ENCODE measurements at regions of chr15 and their contacts with region 1.

Region 1: DNA sequence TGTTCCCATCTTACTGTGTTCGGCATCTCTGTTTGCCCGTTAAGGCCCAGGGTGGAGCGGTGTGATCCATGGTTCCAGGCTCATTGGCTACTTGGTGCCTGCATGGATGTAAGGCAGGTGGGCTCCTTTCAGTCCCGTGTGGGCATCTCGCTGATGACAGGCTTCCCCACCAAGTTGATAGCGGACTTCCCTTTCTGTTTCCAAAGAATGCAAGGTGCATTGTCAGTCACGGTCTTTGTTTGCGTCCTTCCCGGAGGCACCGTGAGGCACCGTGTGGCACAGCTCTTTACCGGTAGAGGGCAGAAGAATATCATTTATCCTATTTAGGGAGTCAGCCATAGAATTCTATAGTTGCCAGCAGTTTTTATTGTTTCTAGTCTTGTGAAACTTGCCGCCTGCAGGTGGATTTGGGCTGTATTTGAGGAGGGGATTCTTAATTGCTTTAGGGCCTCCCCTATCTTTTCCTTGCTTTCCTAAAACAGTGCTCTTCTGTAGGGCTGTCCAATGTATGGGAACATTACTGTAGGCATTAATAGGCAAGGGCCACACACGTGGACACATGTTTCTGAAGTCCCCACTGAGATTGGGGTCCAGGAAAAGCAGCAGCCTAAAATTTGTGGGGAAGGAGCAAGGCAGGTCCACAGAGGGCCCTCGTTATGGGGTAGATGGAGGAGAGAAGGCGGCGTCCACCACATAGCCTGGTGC is 244.1 kb downstream of the SLCO3A1 start:
- DNase-seq: no peak

Region 2: GRCh38 chr15:92142242-92143232 is 44.9 kb after region 1 on chr15:
- intact Hi-C with region 1: no loop called
- DNase-seq: no peak

Region 3: DNA sequence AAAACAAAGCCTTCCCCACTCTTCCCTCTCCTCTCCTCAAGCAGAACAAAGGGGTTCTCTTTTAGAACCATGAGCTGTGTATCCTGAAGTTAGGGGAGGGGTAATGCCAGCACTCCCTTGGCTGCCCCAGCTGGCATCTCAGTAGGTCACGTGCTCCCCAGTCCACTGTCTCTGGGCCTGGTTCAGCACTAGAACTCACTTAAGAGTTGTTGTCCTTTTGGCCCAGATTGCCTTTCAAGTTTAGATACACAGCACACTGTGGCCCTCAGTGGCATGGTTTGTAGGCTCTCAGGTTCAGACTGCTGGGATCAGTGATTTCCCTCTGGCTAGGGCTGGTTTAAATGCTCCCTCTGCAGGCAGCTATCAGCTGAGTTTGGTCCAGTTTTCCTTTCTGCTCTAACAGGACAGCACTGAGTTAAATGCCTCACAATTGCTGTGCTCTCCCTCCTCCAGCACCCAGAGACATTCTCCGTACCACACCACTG is 107.7 kb after region 1 on chr15:
- intact Hi-C with region 1: loop called (anchors 1 kb)
- DNase-seq: no peak

Region 4: GRCh38 chr15:92226014-92226612 is 128.5 kb after region 1 on chr15:
- intact Hi-C with region 1: loop called (anchors 2 kb)
- DNase-seq: no peak

Region 5: GRCh38 chr15:92391640-92392039 is 294.0 kb after region 1 on chr15:
- intact Hi-C with region 1: loop called (anchors 5 kb)
- DNase-seq: no peak

Region 6: GRCh38 chr15:92473756-92474155 is 376.1 kb after region 1 on chr15:
- intact Hi-C with region 1: no loop called
- DNase-seq: peak; percentile 46

Region 7: DNA sequence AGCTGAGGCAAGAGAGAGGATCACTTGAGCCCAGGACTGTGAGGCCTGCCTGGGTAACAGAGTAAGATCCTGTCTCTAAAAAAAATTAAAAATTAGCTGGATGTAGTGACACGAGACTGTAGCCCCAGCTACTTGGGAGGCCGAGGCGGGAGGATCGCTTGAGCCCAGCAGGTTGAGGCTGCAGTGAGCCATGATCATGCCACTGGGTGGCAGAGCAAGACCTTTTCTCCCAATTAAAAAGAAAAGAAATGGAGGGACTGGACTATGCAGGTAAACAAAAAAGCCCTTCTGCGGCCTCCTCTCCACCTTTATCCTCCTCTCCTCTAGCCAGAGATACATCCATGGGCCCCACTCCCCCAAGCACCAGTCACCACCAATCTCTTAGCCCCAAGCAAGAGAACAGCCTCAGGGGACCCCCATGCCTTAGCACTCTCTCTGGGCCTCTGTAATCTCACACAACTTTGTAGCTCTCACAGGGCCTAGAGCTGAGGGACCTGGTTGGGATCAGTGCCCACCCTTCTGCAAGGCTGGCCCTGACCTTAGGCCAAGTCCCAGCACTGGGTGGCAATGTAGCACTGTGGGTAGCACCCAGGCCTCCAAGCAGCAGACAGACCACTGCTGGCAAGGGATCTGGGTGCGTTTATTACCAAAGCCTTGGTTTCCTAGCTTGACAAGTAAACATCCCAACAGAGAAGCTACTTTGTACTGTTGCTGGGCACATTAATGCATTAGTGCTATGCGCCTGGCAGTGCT is 514.5 kb after region 1 on chr15:
- intact Hi-C with region 1: no loop called
- DNase-seq: no peak

Region 8: DNA sequence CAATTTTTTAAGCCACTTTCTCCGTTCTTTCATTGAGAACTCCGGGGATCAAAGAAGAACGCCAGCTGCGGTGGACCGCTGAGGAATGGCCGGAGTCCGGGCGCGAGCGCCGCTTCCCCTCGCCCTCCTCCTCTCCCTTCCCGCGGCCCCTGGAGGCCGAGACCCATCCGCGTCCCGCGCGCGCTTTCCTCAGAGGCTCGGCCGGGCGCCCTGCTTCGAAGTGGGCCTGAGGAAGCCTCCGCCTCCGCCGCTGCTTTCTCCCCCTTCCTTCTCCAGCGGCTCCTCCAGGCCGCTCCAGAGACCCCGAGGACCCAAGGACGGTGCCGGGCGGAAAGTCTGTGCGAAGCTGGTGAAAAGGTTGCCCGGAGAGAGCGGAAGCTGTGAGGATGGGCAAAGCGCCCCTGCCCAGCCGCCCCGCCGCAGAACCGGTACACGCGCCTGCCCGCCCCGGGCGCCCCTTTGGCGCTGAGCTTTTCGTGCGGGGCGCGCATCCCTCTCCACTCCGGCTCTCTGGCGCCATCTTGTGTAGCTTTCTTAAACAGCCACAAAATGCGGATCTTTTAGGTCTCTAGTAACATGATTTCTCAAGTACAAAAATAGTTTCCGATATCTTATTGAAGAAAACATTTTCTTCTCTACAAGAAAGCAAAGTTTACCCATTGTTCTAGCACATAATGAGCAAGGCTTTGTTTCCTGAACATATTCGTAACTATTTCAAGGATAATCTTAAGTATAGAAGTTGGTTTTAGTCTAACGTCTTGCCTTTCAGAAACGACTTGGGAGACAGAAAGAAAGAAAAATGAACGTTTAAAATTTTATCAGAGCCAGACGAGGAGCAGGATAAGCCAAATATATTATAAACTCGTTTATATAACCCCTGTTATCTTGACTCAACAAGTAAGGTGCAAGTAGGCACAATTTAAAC is 617.1 kb after region 1 on chr15:
- intact Hi-C with region 1: loop called (anchors 5 kb)
- DNase-seq: peak; percentile 79